IMR-90 (cell line): ENCODE measurements at regions of chr1 and their contacts with region 1.

Region 1: DNA sequence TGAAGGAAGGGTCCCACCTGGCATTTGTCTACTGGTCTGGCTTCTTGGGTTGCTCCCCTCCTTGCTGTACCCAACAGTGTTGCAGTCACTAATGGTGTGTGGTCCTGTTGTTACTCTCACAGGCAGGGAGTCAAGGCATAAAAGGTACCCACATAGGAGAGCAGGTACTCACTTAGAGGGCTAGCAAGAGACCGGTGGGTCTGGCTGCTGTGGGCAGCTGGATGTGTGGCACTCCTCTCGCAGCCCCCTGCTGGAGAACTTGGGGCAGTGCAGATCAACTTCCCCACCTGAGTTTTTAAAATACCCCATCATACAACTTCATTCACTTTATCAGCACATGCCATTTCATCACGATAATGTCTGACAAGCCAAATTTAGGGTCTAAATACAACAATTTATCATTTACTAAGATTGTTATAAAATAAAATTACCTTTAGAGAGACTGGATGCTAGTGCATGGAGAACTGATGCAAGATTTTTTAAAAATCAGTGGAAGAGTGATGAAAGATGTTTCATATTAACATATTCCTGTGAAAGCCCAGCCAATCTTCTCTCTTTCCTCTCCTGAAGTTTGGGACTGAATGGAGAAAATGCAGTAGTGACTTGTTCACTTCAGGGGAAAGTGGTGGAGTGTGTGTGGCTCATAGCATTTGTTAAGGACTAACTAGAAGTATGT is 42.8 kb downstream of the ACP6 start:
- DNase-seq: peak; percentile 44
- ATAC-seq: peak; percentile 93
- H3K4me3 ChIP-seq: no peak overlapping the region
- H3K27ac ChIP-seq: no peak overlapping the region
- H3K4me1 ChIP-seq: no peaks in the 10 kb centered on the region; the same call in 1 of the 2 replicates
- H3K27me3 ChIP-seq: no peaks in the 10 kb centered on the region
- CTCF ChIP-seq: peak; percentile 87
- POLR2A ChIP-seq: no peak
- RAD21 ChIP-seq: peak; percentile 76

Region 2: DNA sequence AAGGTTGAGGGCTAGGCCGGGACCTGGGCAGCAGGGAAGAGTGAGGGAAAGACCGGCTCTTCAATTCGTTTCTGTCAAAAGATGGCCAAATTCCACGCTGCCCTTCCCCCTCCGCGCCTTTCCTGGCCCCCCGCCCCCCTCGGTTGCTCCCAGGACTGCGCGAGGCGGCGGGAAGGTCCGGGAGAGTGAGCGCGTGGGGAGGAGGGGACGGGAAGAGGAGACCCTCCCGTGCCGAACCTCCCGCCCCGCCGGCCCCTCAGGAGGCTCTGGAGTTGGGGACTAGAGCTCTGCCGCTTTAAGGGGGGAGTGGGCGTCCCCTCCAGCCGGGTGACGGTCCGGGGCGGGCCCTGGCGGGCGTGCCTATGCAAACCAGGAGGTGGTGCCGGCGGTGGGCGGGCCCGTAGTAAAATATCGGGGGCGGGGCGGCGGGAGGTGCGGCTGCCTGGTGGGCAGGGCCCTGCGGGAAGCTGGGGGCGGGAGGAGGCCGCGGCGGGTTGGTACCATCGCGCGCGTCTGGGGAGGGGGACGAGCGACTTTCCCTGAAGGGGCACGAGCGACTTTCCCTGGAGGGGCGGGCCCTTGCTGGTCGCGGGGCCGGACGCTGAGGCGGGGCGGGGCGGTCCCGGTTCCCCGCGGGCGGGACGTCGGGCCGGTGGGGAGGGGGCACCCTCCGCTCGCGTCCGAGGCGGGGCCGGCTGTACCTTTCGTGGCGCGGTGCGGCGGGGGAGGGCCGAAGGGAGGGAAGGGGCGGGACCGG is 28.0 kb before region 1 on chr1:
- CTCF ChIA-PET with region 1: interaction called, 3 read pairs
- POLR2A ChIA-PET with region 1: no interaction called
- dilution Hi-C with region 1: no loop called
- in situ Hi-C with region 1: no loop called
- intact Hi-C with region 1: loop called (anchors 2 kb)
- DNase-seq: peak; percentile 95
- ATAC-seq: peak; percentile 90
- H3K4me3 ChIP-seq: peak overlapping the region; percentile 59
- H3K27ac ChIP-seq: peak overlapping the region; percentile 81
- H3K4me1 ChIP-seq: peaks cover 4% of the 10 kb centered on the region
- H3K27me3 ChIP-seq: no peaks in the 10 kb centered on the region
- CTCF ChIP-seq: no peak
- POLR2A ChIP-seq: peak; percentile 44; the same call in 1 of the 2 replicates
- RAD21 ChIP-seq: no peak

Region 3: GRCh38 chr1:147850759-147851508 is 223.4 kb after region 1 on chr1:
- CTCF ChIA-PET with region 1: no interaction called
- POLR2A ChIA-PET with region 1: no interaction called
- dilution Hi-C with region 1: no loop called
- in situ Hi-C with region 1: no loop called
- intact Hi-C with region 1: no loop called
- DNase-seq: peak; percentile 13
- ATAC-seq: no peak
- H3K4me3 ChIP-seq: no peak overlapping the region
- H3K27ac ChIP-seq: no peak overlapping the region
- H3K4me1 ChIP-seq: no peaks in the 10 kb centered on the region
- H3K27me3 ChIP-seq: no peaks in the 10 kb centered on the region
- CTCF ChIP-seq: no peak
- POLR2A ChIP-seq: no peak
- RAD21 ChIP-seq: no peak